Pancreas (tissue), 10 donors: ENCODE measurements at regions of chr11 and their contacts with region 1.

Region 1: DNA sequence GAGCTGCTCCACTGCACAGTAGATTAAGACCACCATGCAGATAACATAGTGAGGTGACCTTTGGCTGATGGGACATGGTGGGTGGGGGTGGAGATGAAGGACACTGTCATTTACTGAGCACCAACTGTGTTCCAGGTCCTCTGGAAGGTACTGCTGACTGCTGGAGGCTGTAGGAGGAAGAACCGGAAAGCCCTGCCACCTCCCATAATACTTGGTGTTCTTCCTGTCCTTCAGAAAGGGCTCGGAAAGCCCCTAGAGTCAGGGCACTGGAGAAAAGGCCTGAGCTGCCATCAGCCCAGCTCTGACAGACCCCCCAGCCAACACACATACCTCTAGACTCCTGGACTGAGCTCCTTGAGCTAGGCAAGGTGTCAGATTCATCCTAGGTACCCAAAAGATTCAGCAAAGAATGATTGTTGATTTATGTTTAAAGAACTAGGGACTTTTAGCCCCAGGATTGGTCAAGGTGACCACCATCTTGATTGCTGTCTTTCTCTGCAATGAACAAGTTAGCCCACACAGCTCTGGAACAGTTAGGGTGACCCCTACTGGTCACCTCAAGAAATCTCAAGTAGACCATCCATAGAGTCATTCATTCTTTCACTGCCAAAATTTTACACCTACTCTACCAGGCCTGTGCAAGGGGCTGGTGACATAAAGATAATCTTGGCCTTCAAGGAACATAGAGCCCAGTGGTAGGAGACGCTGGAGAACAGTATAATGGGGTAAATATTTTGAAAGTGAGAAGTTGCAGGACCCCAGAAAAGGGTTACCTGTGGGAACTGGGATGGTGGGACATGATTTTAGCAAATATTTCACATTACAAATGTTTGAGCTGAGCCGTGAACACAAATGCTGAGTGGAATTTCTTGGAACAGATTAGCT is 39.4 kb downstream of the IRAG1 start:
- DNase-seq: peak in 2 of 6 donors; percentile 23 to 38
- ATAC-seq: peak; percentile 70 to 89 (median 85)
- H3K4me3 ChIP-seq: no peak overlapping the region
- H3K27ac ChIP-seq: no peak overlapping the region
- H3K4me1 ChIP-seq: peaks cover 0 to 3% (median 0%) of the 10 kb centered on the region in 3 donors
- H3K27me3 ChIP-seq: no peaks in the 10 kb centered on the region
- CTCF ChIP-seq: peak; percentile 47 to 59 (median 56)

Region 2: GRCh38 chr11:10405855-10406592 is 248.1 kb before region 1 on chr11:
- intact Hi-C with region 1: loop called in 2 of 3 experiments (anchors 10 kb)
- DNase-seq: peak in 4 of 6 donors; percentile 40 to 73 (median 60)
- ATAC-seq: peak; percentile 76 to 99 (median 97)
- H3K4me3 ChIP-seq: no peak overlapping the region
- H3K27ac ChIP-seq: no peak overlapping the region
- H3K4me1 ChIP-seq: no peaks in the 10 kb centered on the region
- H3K27me3 ChIP-seq: no peaks in the 10 kb centered on the region
- CTCF ChIP-seq: peak; percentile 16 to 55 (median 38)

Region 3: GRCh38 chr11:10476927-10477689 is 177.1 kb before region 1 on chr11:
- intact Hi-C with region 1: no loop called
- DNase-seq: no peak
- ATAC-seq: no peak
- H3K4me3 ChIP-seq: no peak overlapping the region
- H3K27ac ChIP-seq: no peak overlapping the region
- H3K4me1 ChIP-seq: no peaks in the 10 kb centered on the region
- H3K27me3 ChIP-seq: no peaks in the 10 kb centered on the region
- CTCF ChIP-seq: no peak